ENCODE measurements at regions of chr13 and their contacts with region 1.

Region 1: GRCh38 chr13:44435142-44435982 is 61.7 kb downstream of the SERP2 start:
- DNase-seq: peak; percentile 87
- H3K4me3 ChIP-seq: peak overlapping the region; percentile 72
- H3K27me3 ChIP-seq: no peaks in the 10 kb centered on the region
- CTCF ChIP-seq: no peak

Region 2: GRCh38 chr13:43905435-43906031 is 529.8 kb before region 1 on chr13:
- CTCF ChIA-PET with region 1: interaction called, 24 read pairs
- POLR2A ChIA-PET with region 1: no interaction called
- DNase-seq: no peak
- H3K4me3 ChIP-seq: no peak overlapping the region
- H3K27me3 ChIP-seq: no peaks in the 10 kb centered on the region
- CTCF ChIP-seq: peak; percentile 54

Region 3: GRCh38 chr13:44136696-44137268 is 298.6 kb before region 1 on chr13:
- CTCF ChIA-PET with region 1: no interaction called
- POLR2A ChIA-PET with region 1: interaction called, 27 read pairs
- DNase-seq: no peak
- H3K4me3 ChIP-seq: no peak overlapping the region
- H3K27me3 ChIP-seq: no peaks in the 10 kb centered on the region
- CTCF ChIP-seq: no peak

Region 4: GRCh38 chr13:44191504-44192171 is 243.7 kb before region 1 on chr13:
- CTCF ChIA-PET with region 1: interaction called, 48 read pairs
- POLR2A ChIA-PET with region 1: interaction called, 3 read pairs
- DNase-seq: peak; percentile 46
- H3K4me3 ChIP-seq: no peak overlapping the region
- H3K27me3 ChIP-seq: peaks cover 3% of the 10 kb centered on the region
- CTCF ChIP-seq: peak; percentile 77

Region 5: DNA sequence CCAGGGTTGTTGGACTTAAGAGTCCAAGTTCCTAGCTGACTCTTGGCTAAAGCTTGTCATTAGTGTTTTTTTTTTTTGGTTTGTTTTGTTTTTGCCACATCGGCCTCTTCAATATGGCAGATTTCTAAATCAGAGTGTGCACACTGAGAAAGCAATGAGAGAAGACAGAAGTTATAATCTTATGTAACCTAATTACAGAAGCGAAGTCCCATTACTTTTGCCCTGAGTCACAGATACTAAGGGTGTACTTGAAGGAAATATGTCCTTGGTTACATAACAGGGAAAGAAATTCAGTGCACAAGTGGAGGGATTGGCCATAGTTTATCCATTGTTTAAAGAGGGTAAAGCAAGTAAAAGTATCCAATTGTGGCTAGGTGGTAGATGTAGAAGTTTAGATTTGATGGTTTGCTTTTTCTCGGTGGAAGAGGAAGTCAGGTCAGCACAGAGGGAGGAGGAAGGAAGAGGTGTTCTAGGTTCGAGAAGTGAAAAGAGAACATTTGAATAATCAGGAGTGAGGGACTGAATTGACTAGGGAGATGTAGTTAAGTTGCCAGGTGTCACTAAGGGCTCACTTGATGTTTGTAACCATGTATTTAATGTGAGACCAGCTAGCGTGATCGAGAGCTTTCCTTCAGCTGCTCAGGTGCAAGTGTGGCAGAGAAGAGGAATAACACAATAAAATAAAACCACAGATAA is 697.2 kb after region 1 on chr13:
- CTCF ChIA-PET with region 1: no interaction called
- POLR2A ChIA-PET with region 1: interaction called, 17 read pairs
- DNase-seq: no peak
- H3K4me3 ChIP-seq: no peak overlapping the region
- H3K27me3 ChIP-seq: no peaks in the 10 kb centered on the region
- CTCF ChIP-seq: no peak